AG04450 (cell line): ENCODE measurements at regions of chr1 and their contacts with region 1.

Region 1: GRCh38 chr1:87328272-87329050 is at the start of gene LMO4:
- DNase-seq: peak; percentile 95
- H3K4me3 ChIP-seq: peak within 1 kb of the TSS; percentile 85
- H3K27ac ChIP-seq: peak within 1 kb of the TSS; percentile 98
- H3K27me3 ChIP-seq: no peaks in the 10 kb centered on the region
- CTCF ChIP-seq: no peak
- polyA plus RNA-seq, gene LMO4: 115 and 138 TPM in 2 replicates

Region 2: GRCh38 chr1:86061551-86061990 is 1266.9 kb before region 1 on chr1:
- CTCF ChIA-PET with region 1: no interaction called
- POLR2A ChIA-PET with region 1: no interaction called
- DNase-seq: no peak
- H3K4me3 ChIP-seq: no peak overlapping the region
- H3K27ac ChIP-seq: no peak overlapping the region
- H3K27me3 ChIP-seq: no peaks in the 10 kb centered on the region
- CTCF ChIP-seq: no peak

Region 3: GRCh38 chr1:87007323-87007722 is 321.1 kb before region 1 on chr1:
- CTCF ChIA-PET with region 1: no interaction called
- POLR2A ChIA-PET with region 1: no interaction called
- DNase-seq: no peak
- H3K4me3 ChIP-seq: no peak overlapping the region
- H3K27ac ChIP-seq: no peak overlapping the region
- H3K27me3 ChIP-seq: no peaks in the 10 kb centered on the region
- CTCF ChIP-seq: no peak

Region 4: DNA sequence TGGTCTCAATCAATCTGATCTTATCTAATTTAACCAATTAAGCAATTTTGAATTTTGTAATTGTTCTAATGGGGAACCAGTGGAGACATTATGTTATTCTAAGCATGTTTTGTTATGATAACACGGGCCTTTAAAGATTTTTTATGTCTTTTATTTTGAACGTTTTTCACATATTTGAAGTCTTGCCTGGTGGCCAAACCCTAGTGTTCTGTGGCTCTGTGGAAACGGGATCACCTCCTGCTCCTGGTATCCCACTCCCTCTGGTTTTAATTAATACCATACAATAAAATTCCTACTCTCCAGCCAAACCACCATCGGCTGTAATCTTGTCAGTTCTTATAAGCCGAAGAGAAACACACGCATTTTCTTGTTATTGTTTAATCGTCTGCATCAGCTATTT is 22.7 kb before region 1 on chr1:
- CTCF ChIA-PET with region 1: interaction called, 31 read pairs
- POLR2A ChIA-PET with region 1: no interaction called
- DNase-seq: no peak
- H3K4me3 ChIP-seq: no peak overlapping the region
- H3K27ac ChIP-seq: no peak overlapping the region
- H3K27me3 ChIP-seq: peaks cover 14% of the 10 kb centered on the region
- CTCF ChIP-seq: no peak

Region 5: DNA sequence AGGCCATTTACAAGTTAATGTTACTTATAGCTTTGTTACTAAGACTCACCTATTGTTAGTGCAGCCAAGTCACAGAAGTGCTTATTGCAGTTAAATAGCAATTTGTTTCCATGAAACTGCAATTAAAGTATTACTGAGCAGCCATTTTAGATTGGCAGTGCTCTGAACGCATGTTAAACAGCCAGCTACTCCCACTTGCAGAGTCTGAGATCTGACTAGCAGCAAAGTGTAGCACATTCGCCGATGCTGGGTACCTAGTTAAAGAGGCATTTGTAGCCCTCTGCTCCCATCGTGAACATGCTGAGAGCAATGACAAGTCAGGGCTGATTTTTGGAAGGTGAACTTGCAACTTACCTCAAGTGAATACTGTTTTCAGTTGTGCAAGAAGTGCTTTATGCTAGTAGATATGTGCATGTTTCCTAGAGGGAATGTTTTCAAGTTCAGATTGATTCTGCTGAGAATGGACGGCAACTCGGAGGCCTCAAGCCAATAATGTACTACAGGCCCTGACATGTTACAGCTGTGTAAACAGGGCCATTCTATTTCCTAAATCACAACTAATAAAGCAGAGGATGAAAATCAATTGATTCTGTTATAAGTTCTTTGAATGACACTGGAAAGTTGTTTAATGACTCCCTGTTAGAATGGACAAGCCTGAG is 20.0 kb after region 1 on chr1:
- CTCF ChIA-PET with region 1: interaction called, 13 read pairs
- POLR2A ChIA-PET with region 1: no interaction called
- DNase-seq: no peak
- H3K4me3 ChIP-seq: no peak overlapping the region
- H3K27ac ChIP-seq: no peak overlapping the region
- H3K27me3 ChIP-seq: no peaks in the 10 kb centered on the region
- CTCF ChIP-seq: no peak

Region 6: GRCh38 chr1:88061492-88062177 is 733.2 kb after region 1 on chr1:
- CTCF ChIA-PET with region 1: interaction called, 15 read pairs
- POLR2A ChIA-PET with region 1: no interaction called
- DNase-seq: peak; percentile 20
- H3K4me3 ChIP-seq: no peak overlapping the region
- H3K27ac ChIP-seq: no peak overlapping the region
- H3K27me3 ChIP-seq: no peaks in the 10 kb centered on the region
- CTCF ChIP-seq: peak; percentile 81